PC-9 (cell line): ENCODE measurements at regions of chr3 and their contacts with region 1.

Region 1: GRCh38 chr3:149282836-149283235 is 50.6 kb downstream of the TM4SF18 start:
- DNase-seq: no peak
- H3K4me3 ChIP-seq: no peak overlapping the region
- H3K27ac ChIP-seq: peak overlapping the region; percentile 17; the same call in 1 of the 2 replicates
- H3K4me1 ChIP-seq: peaks cover 18% of the 10 kb centered on the region
- H3K27me3 ChIP-seq: no peaks in the 10 kb centered on the region
- CTCF ChIP-seq: no peak

Region 2: GRCh38 chr3:149771652-149772271 is 488.9 kb after region 1 on chr3:
- CTCF ChIA-PET with region 1: no interaction called
- POLR2A ChIA-PET with region 1: interaction called, 14 read pairs
- intact Hi-C with region 1: no loop called
- DNase-seq: peak in 1 of 2 experiments; percentile 43
- H3K4me3 ChIP-seq: no peak overlapping the region
- H3K27ac ChIP-seq: no peak overlapping the region
- H3K4me1 ChIP-seq: no peaks in the 10 kb centered on the region
- H3K27me3 ChIP-seq: no peaks in the 10 kb centered on the region
- CTCF ChIP-seq: peak; percentile 85